Heart right ventricle (tissue), 16 donors: ENCODE measurements at regions of chr14 and their contacts with region 1.

Region 1: DNA sequence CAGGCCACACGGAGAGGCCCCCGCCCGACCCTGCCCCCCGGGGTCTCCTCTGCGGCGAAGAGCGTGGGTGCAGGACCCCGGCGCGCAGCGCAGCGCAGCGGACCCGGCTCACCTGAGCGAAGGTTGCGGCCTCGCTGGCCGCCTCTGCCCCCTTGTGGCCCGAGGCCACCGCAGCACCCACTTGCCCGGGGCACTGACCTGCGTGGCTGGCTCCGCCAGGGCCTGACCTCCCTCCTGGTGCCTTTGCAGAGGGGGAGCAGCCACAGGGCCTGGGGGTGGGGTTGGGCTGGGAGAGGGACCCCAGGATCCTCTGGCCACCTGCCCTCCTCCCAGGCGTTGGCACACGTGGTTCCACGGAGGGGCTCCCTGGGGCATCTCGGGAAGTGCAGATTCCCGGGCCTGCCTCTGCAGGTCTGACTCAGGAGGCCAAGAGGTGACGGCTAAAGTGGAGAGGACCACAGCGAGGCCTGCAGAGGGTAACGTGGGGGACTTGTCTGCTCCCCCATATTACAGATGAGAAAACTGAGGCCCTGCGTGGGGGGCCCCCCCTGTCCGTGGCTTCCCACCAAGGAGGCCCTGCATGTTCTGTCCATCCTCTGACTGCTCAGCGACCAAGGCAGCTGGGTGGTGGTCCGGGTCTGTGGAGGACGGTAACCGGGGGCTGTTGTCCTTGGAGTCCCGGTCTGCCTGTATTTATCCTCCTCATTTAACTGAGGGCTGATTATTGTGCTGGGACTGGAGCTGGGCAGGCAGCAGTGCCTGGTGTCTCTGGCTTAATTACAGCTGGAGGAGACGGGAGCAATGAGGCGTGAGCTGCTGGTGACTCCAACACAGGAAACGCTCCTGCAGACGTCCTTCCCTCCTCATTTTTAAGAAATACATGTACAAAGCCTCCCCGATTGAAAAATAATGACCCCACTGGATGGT is 67.9 kb upstream of the BEGAIN start:
- DNase-seq: peak in 1 of 2 donors; percentile 40
- ATAC-seq: peak in 6 of 8 donors; percentile 39 to 69 (median 63)
- H3K4me3 ChIP-seq: no peak overlapping the region
- H3K27ac ChIP-seq: no peak overlapping the region
- H3K4me1 ChIP-seq: no peaks in the 10 kb centered on the region
- H3K27me3 ChIP-seq: peaks cover 6 to 47% (median 42%) of the 10 kb centered on the region in 7 donors
- CTCF ChIP-seq: peak; percentile 44 to 70 (median 60)

Region 2: DNA sequence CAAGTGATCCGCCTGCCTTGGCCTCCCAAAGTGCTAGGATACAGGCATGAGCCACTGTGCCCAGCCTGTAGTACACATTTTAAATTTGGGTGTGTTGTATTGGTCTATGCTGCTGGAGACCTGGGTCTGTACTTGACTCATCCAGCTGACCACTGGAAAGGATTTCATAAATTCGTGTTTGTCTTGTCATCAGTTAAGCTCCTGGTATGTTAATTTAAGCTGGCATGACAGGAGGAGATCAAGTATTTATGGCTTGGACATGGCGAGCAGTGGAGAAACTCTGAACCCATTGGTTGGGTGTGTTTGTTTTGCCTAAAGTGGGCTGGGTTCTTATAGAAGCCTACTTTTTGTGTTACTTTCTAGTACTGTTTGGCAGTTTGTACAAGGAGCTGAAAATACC is 391.9 kb before region 1 on chr14:
- intact Hi-C with region 1: loop called in 1 of 10 experiments (anchors 10 kb)
- DNase-seq: no peak
- ATAC-seq: peak in 1 of 8 donors; percentile 8
- H3K4me3 ChIP-seq: no peak overlapping the region
- H3K27ac ChIP-seq: peak overlapping the region in 5 of 10 donors; percentile 2 to 64 (median 20)
- H3K4me1 ChIP-seq: peaks cover 0 to 78% (median 49%) of the 10 kb centered on the region in 9 donors
- H3K27me3 ChIP-seq: no peaks in the 10 kb centered on the region
- CTCF ChIP-seq: no peak

Region 3: GRCh38 chr14:100383727-100384158 is 271.3 kb before region 1 on chr14:
- intact Hi-C with region 1: loop called in 2 of 10 experiments (anchors 2 to 5 kb)
- DNase-seq: peak; percentile 53 to 55
- ATAC-seq: peak; percentile 48 to 83 (median 70)
- H3K4me3 ChIP-seq: no peak overlapping the region
- H3K27ac ChIP-seq: no peak overlapping the region
- H3K4me1 ChIP-seq: peaks cover 0 to 10% (median 0%) of the 10 kb centered on the region in 9 donors
- H3K27me3 ChIP-seq: no peaks in the 10 kb centered on the region
- CTCF ChIP-seq: peak; percentile 66 to 88 (median 82)

Region 4: DNA sequence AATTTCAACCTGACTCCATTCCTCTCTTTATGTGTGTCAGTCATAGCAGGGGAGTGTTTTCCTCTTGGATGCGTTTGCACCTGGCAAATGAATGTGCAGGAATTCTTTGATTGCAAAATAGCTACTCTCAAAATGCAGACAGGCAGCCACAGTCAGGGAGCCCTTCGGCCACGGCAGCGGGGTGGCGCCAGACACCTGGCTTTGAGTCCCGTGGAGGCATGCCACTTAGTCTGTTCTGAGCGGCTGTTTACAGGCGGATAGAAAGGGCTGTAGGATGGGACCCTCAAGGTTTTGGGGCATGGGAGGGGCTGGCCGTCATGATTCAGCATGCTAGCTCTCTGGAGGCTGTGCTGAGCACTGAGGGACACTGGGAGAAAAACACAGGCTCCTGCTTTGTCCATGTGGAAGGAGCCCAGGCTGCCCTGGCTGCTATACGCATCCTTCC is 214.9 kb before region 1 on chr14:
- intact Hi-C with region 1: loop called in 4 of 10 experiments (anchors 2 to 5 kb)
- DNase-seq: peak; percentile 33 to 66
- ATAC-seq: peak; percentile 82 to 94 (median 89)
- H3K4me3 ChIP-seq: no peak overlapping the region
- H3K27ac ChIP-seq: peak overlapping the region in 7 of 10 donors; percentile 32 to 69 (median 57)
- H3K4me1 ChIP-seq: peaks cover 6 to 34% (median 24%) of the 10 kb centered on the region in 9 donors
- H3K27me3 ChIP-seq: no peaks in the 10 kb centered on the region
- CTCF ChIP-seq: peak; percentile 49 to 83 (median 62)

Region 5: GRCh38 chr14:100524933-100525243 is 130.2 kb before region 1 on chr14:
- intact Hi-C with region 1: loop called in 1 of 10 experiments (anchors 5 kb)
- DNase-seq: peak in 1 of 2 donors; percentile 13
- ATAC-seq: no peak
- H3K4me3 ChIP-seq: no peak overlapping the region
- H3K27ac ChIP-seq: no peak overlapping the region
- H3K4me1 ChIP-seq: no peaks in the 10 kb centered on the region
- H3K27me3 ChIP-seq: no peaks in the 10 kb centered on the region
- CTCF ChIP-seq: peak in 5 of 9 donors; percentile 19 to 57 (median 43)